ENCODE measurements at regions of chr17 and their contacts with region 1.

Region 1: GRCh38 chr17:35870906-35871819 is 2.5 kb upstream of the HEATR9 start:
- DNase-seq: peak; percentile 35
- H3K4me3 Mint-ChIP-seq: no peak overlapping the region
- H3K27ac Mint-ChIP-seq: peak overlapping the region; percentile 52
- H3K4me1 Mint-ChIP-seq: peaks cover 54% of the 10 kb centered on the region
- H3K27me3 Mint-ChIP-seq: no peaks in the 10 kb centered on the region

Region 2: GRCh38 chr17:35849469-35850348 is 21.5 kb before region 1 on chr17:
- CTCF ChIA-PET with region 1: interaction called, 16 read pairs
- POLR2A ChIA-PET with region 1: interaction called, 3 read pairs
- DNase-seq: peak; percentile 68
- H3K4me3 Mint-ChIP-seq: no peak overlapping the region
- H3K27ac Mint-ChIP-seq: peak overlapping the region; percentile 44
- H3K4me1 Mint-ChIP-seq: peaks cover 20% of the 10 kb centered on the region
- H3K27me3 Mint-ChIP-seq: no peaks in the 10 kb centered on the region

Region 3: DNA sequence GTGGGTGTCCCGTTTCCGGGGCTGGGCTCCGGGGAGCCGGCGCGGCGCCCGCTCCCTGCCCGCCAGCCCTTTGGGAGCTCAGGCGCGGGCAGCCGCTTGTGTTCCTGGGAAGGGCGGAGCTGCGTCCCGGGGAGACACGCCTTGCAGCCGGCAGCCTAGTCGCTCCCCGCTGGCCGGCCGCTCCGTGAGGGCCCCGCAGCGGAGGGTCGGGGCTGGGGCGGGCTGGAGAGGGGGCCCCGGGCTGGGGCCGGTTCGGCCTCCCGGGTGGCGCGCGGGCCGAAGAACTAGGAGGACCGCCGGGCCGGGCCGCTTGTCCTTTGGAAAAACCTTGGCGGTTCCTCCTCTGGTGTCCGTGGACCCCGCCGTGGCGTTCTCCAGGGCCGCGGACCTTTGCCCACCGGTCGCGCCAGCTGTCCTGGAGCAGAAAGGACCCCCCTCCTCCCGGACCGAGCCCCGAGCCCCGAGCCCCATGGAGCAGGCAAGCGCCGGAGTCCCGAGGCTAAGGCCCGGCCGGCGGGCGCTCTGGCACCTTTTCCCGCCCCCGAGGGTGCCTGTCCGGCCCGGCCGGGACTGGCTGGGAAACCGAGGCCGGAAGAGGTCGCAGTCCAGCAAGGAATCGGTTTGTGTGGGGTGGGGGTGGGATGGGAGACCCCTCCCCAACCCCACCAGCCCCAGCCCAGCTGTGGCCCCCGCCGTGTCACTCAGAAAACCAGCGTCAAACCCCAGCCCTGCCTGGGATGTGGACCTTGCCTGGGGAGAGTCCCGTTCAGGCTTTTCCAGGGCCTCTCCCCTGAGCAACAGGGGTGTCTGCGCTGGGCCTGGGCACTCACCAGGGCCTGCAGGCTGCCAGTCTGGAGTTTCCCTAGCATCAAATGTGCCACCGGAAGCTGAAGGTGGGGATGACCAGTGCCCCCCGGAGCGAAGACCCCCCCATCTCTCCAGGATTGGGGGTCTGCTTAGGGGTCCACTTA is 312.1 kb after region 1 on chr17:
- CTCF ChIA-PET with region 1: no interaction called
- POLR2A ChIA-PET with region 1: no interaction called
- DNase-seq: no peak
- H3K4me3 Mint-ChIP-seq: peak overlapping the region; percentile 13
- H3K27ac Mint-ChIP-seq: no peak overlapping the region
- H3K4me1 Mint-ChIP-seq: peaks cover 6% of the 10 kb centered on the region
- H3K27me3 Mint-ChIP-seq: peaks cover 58% of the 10 kb centered on the region

Measured in activated CD4-positive, alpha-beta memory T cell treated with anti-CD3 and anti-CD28 coated beads, Interleukin-2, amount 10 ng/mL, durations not matched to agents 7 days and 5 days (primary cell).